ENCODE measurements at regions of chr21 and their contacts with region 1.

Region 1: DNA sequence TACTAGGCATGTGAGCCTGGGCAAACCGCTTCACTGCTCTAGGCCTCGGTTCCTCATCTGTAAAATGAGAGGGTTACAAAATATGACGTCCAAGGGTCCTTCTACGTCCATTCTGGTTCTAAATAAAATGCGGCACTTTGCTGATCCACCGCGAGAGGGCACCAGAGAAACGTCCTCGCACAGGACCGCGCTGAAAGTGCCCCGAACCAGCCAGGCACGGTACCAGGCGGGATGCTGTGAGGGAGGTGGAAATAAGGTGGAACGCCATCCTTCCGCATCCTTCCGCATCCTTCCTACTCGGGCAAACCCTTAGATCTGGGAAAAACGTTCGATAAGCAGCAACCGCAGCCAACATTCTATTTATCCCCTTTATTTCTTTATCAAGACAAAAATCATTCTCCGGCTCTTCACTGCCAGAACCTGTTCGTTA is 60.3 kb upstream of the KRTAP19-8 start:
- DNase-seq: peak; percentile 43
- ATAC-seq: peak; percentile 71
- H3K4me3 ChIP-seq: peak overlapping the region in 1 of 2 experiments; percentile 30; a peak in 2 of 4 replicates
- H3K27ac ChIP-seq: no peak overlapping the region
- H3K4me1 ChIP-seq: peaks cover 2% of the 10 kb centered on the region; the same call in 1 of the 2 replicates
- H3K27me3 ChIP-seq: no peaks in the 10 kb centered on the region
- CTCF ChIP-seq: peak; percentile 88

Region 2: GRCh38 chr21:31180256-31181081 is 81.9 kb after region 1 on chr21:
- CTCF ChIA-PET with region 1: interaction called, 5 read pairs
- POLR2A ChIA-PET with region 1: no interaction called
- in situ Hi-C with region 1: no loop called
- intact Hi-C with region 1: loop called (anchors 1 kb)
- DNase-seq: no peak
- ATAC-seq: peak; percentile 63; the same call in 1 of the 2 replicates
- H3K4me3 ChIP-seq: no peak overlapping the region
- H3K27ac ChIP-seq: no peak overlapping the region
- H3K4me1 ChIP-seq: no peaks in the 10 kb centered on the region
- H3K27me3 ChIP-seq: no peaks in the 10 kb centered on the region
- CTCF ChIP-seq: peak; percentile 62; the same call in 1 of the 2 replicates

Region 3: DNA sequence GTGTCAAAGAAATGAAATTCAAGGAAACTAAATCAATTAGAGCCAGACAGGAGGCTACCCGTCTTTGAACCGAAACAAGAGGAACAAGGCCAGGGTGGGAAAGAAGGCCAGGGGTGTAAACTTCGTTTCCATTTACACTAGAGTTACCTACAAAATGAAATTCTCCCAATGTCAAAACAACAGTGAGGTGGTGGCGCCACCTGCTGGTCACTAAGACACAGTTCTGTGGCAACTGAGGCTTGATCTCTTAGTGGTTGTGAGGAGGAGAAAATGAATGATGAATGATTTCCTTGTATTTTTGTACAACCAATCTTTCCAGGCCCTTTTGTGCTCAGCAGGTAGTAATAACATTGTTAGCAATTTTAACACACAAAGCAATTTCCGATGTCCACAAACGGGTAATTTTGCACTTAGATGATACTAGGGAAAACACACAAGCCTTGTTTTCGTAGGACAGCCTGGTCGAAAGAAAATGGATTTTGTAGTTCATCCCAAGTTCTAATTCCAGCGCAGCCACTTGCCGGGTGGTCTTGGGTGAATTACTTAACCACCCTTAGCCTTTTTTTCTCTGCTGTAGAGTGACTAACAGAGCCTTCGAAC is 506.1 kb after region 1 on chr21:
- CTCF ChIA-PET with region 1: no interaction called
- POLR2A ChIA-PET with region 1: no interaction called
- in situ Hi-C with region 1: no loop called
- intact Hi-C with region 1: loop called (anchors 5 kb)
- DNase-seq: peak; percentile 22
- ATAC-seq: peak; percentile 82
- H3K4me3 ChIP-seq: no peak overlapping the region
- H3K27ac ChIP-seq: no peak overlapping the region
- H3K4me1 ChIP-seq: no peaks in the 10 kb centered on the region
- H3K27me3 ChIP-seq: no peaks in the 10 kb centered on the region
- CTCF ChIP-seq: peak; percentile 84

Measured in Panc1 (cell line).